ENCODE measurements at regions of chr16 and their contacts with region 1.

Region 1: GRCh38 chr16:55655860-55656695 is at the start of gene SLC6A2:
- DNase-seq: peak; percentile 95
- H3K4me3 ChIP-seq: peak within 1 kb of the TSS in 1 of 2 experiments; percentile 59; a peak in 2 of 4 replicates
- H3K27ac ChIP-seq: peak within 1 kb of the TSS; percentile 22 to 100; a peak in 2 of 4 replicates
- H3K4me1 ChIP-seq: peaks cover 0 to 58% of the 10 kb centered on the region in 2 experiments; a peak in 2 of 4 replicates
- H3K27me3 ChIP-seq: peaks cover 12% of the 10 kb centered on the region
- CTCF ChIP-seq: no peak
- EP300 ChIP-seq: peak in 1 of 2 experiments; percentile 90; a peak in 2 of 4 replicates
- RAD21 ChIP-seq: no peak
- polyA plus RNA-seq, gene SLC6A2: 3.3 and 12.7 TPM in 2 replicates

Region 2: DNA sequence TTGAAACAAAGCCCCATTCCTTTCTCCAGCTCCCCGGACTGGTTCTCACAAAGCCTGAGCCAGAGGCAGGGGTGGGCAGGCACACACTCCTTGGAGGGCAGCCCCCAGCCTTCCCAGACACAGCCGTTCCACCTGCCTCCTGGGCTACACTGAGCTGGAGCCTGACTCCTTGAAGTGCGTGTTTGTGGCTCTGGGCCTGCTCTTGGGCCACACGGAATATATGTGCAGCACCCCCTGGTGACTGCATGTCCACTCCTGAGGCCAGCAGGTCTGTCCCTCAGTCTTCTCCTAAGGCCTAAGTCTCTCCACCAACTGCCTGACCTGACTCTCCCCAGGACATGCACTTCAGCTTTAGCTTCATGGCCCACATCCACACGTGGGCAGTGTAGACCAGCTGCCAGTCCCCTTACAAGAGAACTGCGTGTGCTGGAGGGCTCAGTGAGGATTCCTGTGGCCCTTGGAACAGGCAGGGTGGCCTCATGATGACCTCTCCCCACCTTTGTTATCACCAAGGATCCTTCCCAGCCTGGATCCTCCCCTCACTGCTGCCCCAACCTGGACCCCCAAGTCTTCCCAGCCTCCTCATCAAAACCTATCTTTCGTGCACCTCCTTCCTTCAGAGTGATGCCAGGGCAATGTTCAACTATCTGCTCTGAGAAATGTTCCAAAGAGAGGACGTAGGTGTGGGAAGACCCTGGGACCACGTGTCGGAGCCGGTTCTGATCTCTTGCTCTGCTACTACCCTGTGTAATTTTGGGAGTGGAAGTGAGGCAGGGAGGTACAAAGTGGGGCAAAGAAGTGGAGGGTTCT is 12.7 kb before region 1 on chr16:
- CTCF ChIA-PET with region 1: interaction called, 18 read pairs
- POLR2A ChIA-PET with region 1: interaction called, 12 read pairs
- DNase-seq: no peak
- H3K4me3 ChIP-seq: no peak overlapping the region
- H3K27ac ChIP-seq: peak overlapping the region in 1 of 2 experiments; percentile 98; a peak in 2 of 4 replicates
- H3K4me1 ChIP-seq: peaks cover 0 to 46% of the 10 kb centered on the region in 2 experiments; a peak in 2 of 4 replicates
- H3K27me3 ChIP-seq: peaks cover 6% of the 10 kb centered on the region; the same call in 1 of the 2 replicates
- CTCF ChIP-seq: peak; percentile 23; the same call in 1 of the 2 replicates
- EP300 ChIP-seq: no peak
- RAD21 ChIP-seq: peak; percentile 55

Measured in SK-N-SH (cell line).